PC-3 (cell line): ENCODE measurements at regions of chr5 and their contacts with region 1.

Region 1: DNA sequence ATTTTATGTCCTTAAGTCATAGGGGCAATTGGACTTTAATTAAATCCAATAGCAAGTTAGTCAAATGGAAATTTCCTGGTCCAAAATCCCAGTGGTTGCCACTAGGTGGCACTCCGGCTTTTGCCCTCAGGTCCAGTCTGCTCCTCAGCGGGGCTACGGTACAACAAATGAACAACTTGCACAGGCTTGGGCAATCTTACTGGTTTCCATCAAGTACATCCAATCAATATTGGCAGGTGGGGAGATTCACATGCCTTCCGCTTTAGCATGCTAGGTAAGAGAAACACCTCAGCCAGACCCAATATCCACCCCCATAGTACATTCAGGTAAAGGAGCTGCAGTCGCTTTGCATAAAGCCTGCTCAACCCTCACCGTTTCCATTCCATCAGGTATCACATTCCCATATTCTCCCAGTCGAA is 6.3 kb upstream of the MXD3 start:
- DNase-seq: peak; percentile 95
- ATAC-seq: peak; percentile 76
- H3K4me3 ChIP-seq: no peak overlapping the region
- H3K27ac ChIP-seq: no peak overlapping the region
- H3K4me1 ChIP-seq: peaks cover 3% of the 10 kb centered on the region
- H3K27me3 ChIP-seq: no peaks in the 10 kb centered on the region
- CTCF ChIP-seq: peak; percentile 99

Region 2: GRCh38 chr5:177290816-177291596 is 27.0 kb before region 1 on chr5:
- CTCF ChIA-PET with region 1: no interaction called
- POLR2A ChIA-PET with region 1: no interaction called
- intact Hi-C with region 1: no loop called
- DNase-seq: no peak
- ATAC-seq: no peak
- H3K4me3 ChIP-seq: no peak overlapping the region
- H3K27ac ChIP-seq: no peak overlapping the region
- H3K4me1 ChIP-seq: no peaks in the 10 kb centered on the region
- H3K27me3 ChIP-seq: no peaks in the 10 kb centered on the region
- CTCF ChIP-seq: no peak

Region 3: DNA sequence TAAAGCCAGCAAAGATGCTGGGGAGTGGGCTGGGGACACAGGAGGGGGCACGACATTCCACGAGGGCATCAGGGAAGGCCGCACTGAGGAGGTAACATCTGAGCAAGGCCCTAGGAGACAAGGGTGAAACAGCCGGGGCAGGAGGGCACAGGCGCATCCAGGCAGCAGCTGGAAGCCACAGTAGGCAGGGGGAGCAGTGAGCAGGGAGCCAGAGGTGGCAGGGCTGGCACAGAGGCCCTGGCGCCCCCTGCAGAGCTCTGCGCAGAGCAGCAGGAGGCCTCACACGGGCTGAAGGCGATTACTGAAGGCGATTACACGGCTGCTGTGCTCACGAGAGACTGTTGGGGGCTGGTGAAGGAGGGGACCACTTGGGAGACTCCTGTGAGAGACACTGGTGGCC is 18.1 kb after region 1 on chr5:
- CTCF ChIA-PET with region 1: no interaction called
- POLR2A ChIA-PET with region 1: no interaction called
- intact Hi-C with region 1: loop called (anchors 1 kb)
- DNase-seq: peak; percentile 53
- ATAC-seq: peak; percentile 84
- H3K4me3 ChIP-seq: no peak overlapping the region
- H3K27ac ChIP-seq: no peak overlapping the region
- H3K4me1 ChIP-seq: no peaks in the 10 kb centered on the region
- H3K27me3 ChIP-seq: no peaks in the 10 kb centered on the region
- CTCF ChIP-seq: peak; percentile 84

Region 4: DNA sequence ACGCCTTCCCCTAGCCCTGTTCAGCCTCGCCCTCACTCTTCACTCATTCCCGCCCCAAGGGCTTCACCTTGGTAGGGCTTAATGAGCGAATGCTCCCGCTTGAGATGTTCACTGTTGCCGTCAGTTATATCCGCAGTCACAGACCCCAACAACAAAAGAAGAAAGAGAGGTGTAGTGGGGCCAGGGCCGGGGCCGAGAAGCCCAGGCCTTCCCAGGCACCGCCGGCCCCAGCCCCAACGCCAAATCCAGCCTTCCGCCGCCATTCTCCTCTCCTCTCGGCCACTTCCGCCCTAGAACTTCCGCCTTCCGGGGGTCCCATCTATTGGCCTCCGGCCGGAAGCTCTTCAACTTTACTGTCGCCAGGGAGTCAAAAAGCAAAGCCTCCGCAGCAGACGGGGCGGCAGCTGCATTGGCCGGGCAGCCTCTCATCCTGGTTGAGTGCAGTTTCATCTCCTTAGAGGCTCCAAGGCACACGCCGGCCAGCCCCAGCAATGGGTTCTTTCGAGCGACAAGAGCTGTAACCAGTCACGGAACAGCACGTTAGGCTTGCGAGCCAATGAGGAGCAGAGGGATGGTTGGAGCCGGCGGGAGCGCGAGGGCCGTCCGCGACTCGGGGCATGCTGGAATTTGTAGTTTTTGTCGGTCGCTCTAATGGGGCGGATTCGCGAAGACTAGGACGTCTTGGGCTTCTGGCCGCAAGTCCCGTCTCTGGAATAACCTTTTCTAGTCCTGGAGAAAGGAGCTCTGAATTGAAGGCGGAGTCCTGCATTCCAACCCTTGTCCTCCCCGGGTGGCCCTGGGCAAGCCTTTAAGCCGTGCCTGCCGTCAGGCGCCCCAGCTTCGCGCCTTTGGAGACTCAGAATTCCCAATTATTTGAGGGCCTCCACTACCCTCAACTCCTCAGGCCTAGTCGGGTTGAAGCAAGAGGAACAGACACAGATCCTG is 33.7 kb after region 1 on chr5 and contains the start of gene LMAN2:
- CTCF ChIA-PET with region 1: interaction called, 3 read pairs
- POLR2A ChIA-PET with region 1: no interaction called
- intact Hi-C with region 1: loop called (anchors 1 kb)
- DNase-seq: peak; percentile 94
- ATAC-seq: peak; percentile 94
- H3K4me3 ChIP-seq: peak within 1 kb of the TSS; percentile 93
- H3K27ac ChIP-seq: peak within 1 kb of the TSS; percentile 93
- H3K4me1 ChIP-seq: peaks cover 36% of the 10 kb centered on the region
- H3K27me3 ChIP-seq: no peaks in the 10 kb centered on the region
- CTCF ChIP-seq: no peak
- total RNA-seq, gene LMAN2: 310 and 369 TPM in 2 replicates

Region 5: GRCh38 chr5:177446200-177447065 is 128.5 kb after region 1 on chr5 and contains the start of gene PRR7:
- CTCF ChIA-PET with region 1: no interaction called
- POLR2A ChIA-PET with region 1: interaction called, 4 read pairs
- intact Hi-C with region 1: loop called (anchors 2 kb)
- DNase-seq: peak; percentile 79
- ATAC-seq: peak; percentile 36
- H3K4me3 ChIP-seq: peak within 1 kb of the TSS; percentile 82
- H3K27ac ChIP-seq: peak within 1 kb of the TSS; percentile 85
- H3K4me1 ChIP-seq: peaks cover 23% of the 10 kb centered on the region
- H3K27me3 ChIP-seq: no peaks in the 10 kb centered on the region
- CTCF ChIP-seq: no peak
- total RNA-seq, gene PRR7: 40.6 and 47.2 TPM in 2 replicates